ENCODE measurements at regions of chrX and their contacts with region 1.

Region 1: GRCh38 chrX:6021316-6022091 is 207.2 kb downstream of the NLGN4X start:
- DNase-seq: peak; percentile 80
- H3K4me3 ChIP-seq: no peak overlapping the region
- H3K27ac ChIP-seq: no peak overlapping the region
- H3K4me1 ChIP-seq: peaks cover 16% of the 10 kb centered on the region
- H3K27me3 ChIP-seq: no peaks in the 10 kb centered on the region
- CTCF ChIP-seq: peak; percentile 88

Region 2: GRCh38 chrX:6363188-6363587 is 341.7 kb after region 1 on chrX:
- CTCF ChIA-PET with region 1: no interaction called
- POLR2A ChIA-PET with region 1: no interaction called
- intact Hi-C with region 1: loop called (anchors 5 kb)
- DNase-seq: peak; percentile 68
- H3K4me3 ChIP-seq: no peak overlapping the region
- H3K27ac ChIP-seq: no peak overlapping the region
- H3K4me1 ChIP-seq: peaks cover 7% of the 10 kb centered on the region
- H3K27me3 ChIP-seq: no peaks in the 10 kb centered on the region
- CTCF ChIP-seq: peak; percentile 62

Measured in A673 (cell line).